Activated CD4-positive, alpha-beta T cell treated with anti-CD3 and anti-CD28 coated beads, Interleukin-2, amount 10 ng/mL, durations not matched to agents 7 days and 5 days (primary cell): ENCODE measurements at regions of chr15 and their contacts with region 1.

Region 1: DNA sequence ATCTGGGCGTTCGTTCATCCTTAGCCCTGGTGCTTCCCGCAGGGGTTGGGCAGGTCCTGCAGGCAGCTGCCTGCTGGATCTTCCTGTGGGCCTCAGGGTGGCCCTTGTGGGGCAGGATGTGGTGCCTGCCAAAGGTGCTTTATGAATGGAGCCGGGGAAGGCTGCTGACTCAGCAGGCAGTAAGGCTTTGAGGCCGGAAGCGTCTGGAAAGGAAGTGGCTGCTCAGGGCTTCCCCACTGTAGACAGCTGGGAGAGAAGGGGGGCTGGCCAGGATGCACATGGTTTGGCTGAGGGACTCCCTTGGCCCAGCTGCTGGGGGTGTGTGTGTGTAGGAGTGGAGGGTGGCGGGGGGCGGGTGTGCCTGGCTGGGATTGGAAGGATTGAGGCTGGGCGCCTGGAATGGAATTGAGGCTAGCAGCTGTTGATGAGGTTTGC is 12.9 kb downstream of the CD276 start:
- DNase-seq: peak; percentile 86
- H3K4me3 Mint-ChIP-seq: no peak overlapping the region
- H3K27ac Mint-ChIP-seq: no peak overlapping the region
- H3K4me1 Mint-ChIP-seq: peaks cover 42% of the 10 kb centered on the region
- H3K27me3 Mint-ChIP-seq: peaks cover 58% of the 10 kb centered on the region

Region 2: DNA sequence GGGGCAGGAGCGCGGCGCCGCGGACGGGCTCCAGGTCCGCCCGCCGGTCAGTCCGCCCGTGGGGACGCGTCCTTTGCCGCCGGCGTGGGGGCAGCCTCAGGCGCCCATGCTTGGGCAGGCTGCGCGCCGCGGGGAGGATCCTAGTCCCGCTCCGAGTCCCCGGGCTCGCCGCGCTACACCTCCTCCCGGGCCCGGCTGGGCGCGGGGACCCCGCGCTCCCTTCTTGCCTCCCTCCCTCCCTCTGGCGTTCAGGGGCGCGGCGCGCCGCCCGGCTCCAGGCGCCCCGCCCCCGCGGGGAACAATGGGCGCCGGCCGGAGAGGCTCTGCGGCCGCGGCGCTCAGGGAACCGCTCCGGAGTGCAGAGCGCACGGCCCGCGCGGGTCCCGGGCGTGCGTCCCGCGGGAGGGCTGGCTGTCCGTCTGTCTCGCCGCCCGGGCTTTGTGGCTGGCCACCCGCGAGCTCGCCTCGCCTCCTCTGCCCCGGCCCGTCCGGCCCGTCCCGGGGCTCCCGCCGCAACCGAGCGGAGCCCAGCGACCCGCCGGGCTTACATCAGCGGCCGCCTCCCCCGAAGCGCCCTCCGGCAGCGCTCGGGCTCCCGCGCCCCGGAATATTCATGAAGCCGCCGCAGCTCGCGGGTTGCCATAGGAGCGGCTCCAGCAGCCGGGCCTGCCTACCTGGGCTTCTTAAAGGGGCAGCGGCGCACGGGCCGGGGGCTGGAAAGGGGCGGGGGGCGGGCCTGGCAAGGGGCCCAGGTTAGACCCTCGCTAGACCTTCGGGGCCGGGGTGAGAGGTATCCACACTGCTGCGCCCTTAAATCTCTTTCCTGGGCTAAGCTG is 328.5 kb before region 1 on chr15 and contains the start of gene HCN4:
- CTCF ChIA-PET with region 1: no interaction called
- POLR2A ChIA-PET with region 1: no interaction called
- DNase-seq: no peak
- H3K4me3 Mint-ChIP-seq: no peak within 1 kb of the TSS
- H3K27ac Mint-ChIP-seq: no peak within 1 kb of the TSS
- H3K4me1 Mint-ChIP-seq: peaks cover 3% of the 10 kb centered on the region
- H3K27me3 Mint-ChIP-seq: peaks cover 55% of the 10 kb centered on the region
- total RNA-seq, gene HCN4: not detected

Region 3: GRCh38 chr15:73560501-73561117 is 136.4 kb before region 1 on chr15:
- CTCF ChIA-PET with region 1: interaction called, 10 read pairs
- POLR2A ChIA-PET with region 1: no interaction called
- DNase-seq: peak; percentile 53
- H3K4me3 Mint-ChIP-seq: no peak overlapping the region
- H3K27ac Mint-ChIP-seq: no peak overlapping the region
- H3K4me1 Mint-ChIP-seq: peaks cover 13% of the 10 kb centered on the region
- H3K27me3 Mint-ChIP-seq: no peaks in the 10 kb centered on the region

Region 4: GRCh38 chr15:73660455-73660854 is 36.6 kb before region 1 on chr15:
- CTCF ChIA-PET with region 1: no interaction called
- POLR2A ChIA-PET with region 1: no interaction called
- DNase-seq: no peak
- H3K4me3 Mint-ChIP-seq: no peak overlapping the region
- H3K27ac Mint-ChIP-seq: no peak overlapping the region
- H3K4me1 Mint-ChIP-seq: peaks cover 3% of the 10 kb centered on the region
- H3K27me3 Mint-ChIP-seq: peaks cover 29% of the 10 kb centered on the region

Region 5: DNA sequence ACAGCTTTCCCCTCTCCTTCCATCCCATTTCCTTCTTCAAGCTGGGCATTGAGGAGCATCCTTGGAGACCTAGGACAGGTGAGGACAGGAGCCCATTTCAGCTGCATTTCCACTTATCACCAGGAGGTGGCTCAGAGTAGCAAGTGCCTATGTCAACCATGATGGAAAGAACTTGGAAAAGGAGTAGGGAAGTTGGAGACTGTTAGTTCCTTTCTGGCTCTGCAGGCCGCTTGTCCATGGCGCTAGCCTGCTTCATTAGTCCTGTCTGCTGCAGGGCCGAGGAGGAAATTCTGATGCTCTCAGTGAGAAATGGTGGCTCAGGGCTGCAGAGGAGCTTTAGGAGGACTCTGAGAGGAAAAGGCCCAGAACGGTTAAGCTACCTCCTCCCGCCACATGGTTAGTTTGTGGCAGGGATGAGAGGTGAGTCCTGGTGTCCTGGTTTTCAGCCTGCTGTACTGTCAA is 19.9 kb before region 1 on chr15:
- CTCF ChIA-PET with region 1: interaction called, 15 read pairs
- POLR2A ChIA-PET with region 1: no interaction called
- DNase-seq: peak; percentile 60
- H3K4me3 Mint-ChIP-seq: no peak overlapping the region
- H3K27ac Mint-ChIP-seq: no peak overlapping the region
- H3K4me1 Mint-ChIP-seq: peaks cover 2% of the 10 kb centered on the region
- H3K27me3 Mint-ChIP-seq: peaks cover 36% of the 10 kb centered on the region

Region 6: GRCh38 chr15:73683777-73684580 is 13.1 kb before region 1 on chr15 and contains the start of gene CD276:
- CTCF ChIA-PET with region 1: interaction called, 32 read pairs
- POLR2A ChIA-PET with region 1: no interaction called
- DNase-seq: no peak
- H3K4me3 Mint-ChIP-seq: no peak within 1 kb of the TSS
- H3K27ac Mint-ChIP-seq: no peak within 1 kb of the TSS
- H3K4me1 Mint-ChIP-seq: peaks cover 3% of the 10 kb centered on the region
- H3K27me3 Mint-ChIP-seq: peaks cover 68% of the 10 kb centered on the region
- total RNA-seq, gene CD276: 0.37 to 0.96 TPM